A673 (cell line): ENCODE measurements at regions of chr12 and their contacts with region 1.

Region 1: DNA sequence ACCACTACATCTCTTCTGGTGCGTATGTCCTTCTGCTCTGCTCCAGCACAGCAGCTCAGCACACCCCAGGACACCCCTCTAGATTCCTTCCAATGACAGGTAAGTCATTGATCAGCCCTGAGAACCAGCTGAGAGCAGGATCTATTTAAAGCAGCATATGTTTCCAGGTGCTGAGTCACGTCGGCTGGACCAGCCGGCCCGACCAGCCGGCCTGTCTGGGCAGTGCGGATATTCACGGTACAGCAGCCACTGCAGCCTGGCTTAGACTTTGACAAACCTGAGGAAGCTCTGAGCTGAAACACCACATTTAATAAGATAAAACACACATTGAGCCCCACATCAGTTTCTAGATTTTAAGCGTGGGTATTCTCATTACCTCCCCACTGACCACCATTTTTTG is 31.8 kb upstream of the RPH3A start:
- DNase-seq: no peak
- H3K4me3 ChIP-seq: no peak overlapping the region
- H3K27ac ChIP-seq: no peak overlapping the region
- H3K4me1 ChIP-seq: no peaks in the 10 kb centered on the region
- H3K27me3 ChIP-seq: no peaks in the 10 kb centered on the region
- CTCF ChIP-seq: no peak

Region 2: GRCh38 chr12:111337371-111337770 is 1422.4 kb before region 1 on chr12:
- CTCF ChIA-PET with region 1: no interaction called
- POLR2A ChIA-PET with region 1: interaction called, 19 read pairs
- intact Hi-C with region 1: no loop called
- DNase-seq: no peak
- H3K4me3 ChIP-seq: no peak overlapping the region
- H3K27ac ChIP-seq: no peak overlapping the region
- H3K4me1 ChIP-seq: no peaks in the 10 kb centered on the region
- H3K27me3 ChIP-seq: no peaks in the 10 kb centered on the region
- CTCF ChIP-seq: no peak